MCF 10A (cell line): ENCODE measurements at regions of chr5 and their contacts with region 1.

Region 1: DNA sequence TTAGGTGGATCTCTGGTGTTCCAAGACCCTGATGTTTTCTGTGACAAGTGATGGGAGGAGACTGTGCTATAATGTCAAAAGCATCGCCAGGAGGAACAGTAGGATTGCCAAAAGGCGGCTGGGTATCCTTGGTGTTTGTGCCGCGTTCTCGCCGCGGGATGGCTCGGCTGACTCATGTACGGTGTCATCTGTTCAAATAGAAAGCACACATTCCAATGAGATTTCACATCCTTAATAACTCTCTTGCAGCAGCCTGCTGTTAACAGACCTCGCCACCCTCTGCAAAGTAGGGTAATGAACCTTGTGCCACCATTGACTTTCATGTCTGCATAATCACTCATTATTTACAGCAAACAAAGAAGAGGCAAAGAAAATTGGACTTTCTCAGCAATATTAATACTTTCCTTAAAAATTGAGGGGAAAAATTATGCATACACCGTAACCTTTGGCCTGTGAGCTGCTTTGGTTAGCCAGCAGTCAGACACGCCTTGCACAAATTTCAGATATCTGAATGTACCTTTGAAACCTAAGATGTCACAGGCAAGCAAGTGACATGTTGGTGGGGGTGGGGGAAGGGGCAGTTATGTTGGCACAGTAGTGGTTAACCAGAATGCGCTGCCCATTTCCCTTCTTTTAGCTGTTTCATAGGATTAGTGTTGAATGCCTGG is 289.4 kb downstream of the EFNA5 start:
- DNase-seq: peak; percentile 87
- H3K4me3 Mint-ChIP-seq: peak overlapping the region; percentile 29
- H3K27ac Mint-ChIP-seq: peak overlapping the region; percentile 78
- H3K4me1 Mint-ChIP-seq: peaks cover 41% of the 10 kb centered on the region
- H3K27me3 Mint-ChIP-seq: no peaks in the 10 kb centered on the region
- CTCF ChIP-seq: no peak

Region 2: GRCh38 chr5:107564896-107565512 is 183.7 kb after region 1 on chr5:
- CTCF ChIA-PET with region 1: interaction called, 7 read pairs
- POLR2A ChIA-PET with region 1: interaction called, 10 read pairs
- intact Hi-C with region 1: no loop called
- DNase-seq: no peak
- H3K4me3 Mint-ChIP-seq: peak overlapping the region; percentile 65
- H3K27ac Mint-ChIP-seq: peak overlapping the region; percentile 95
- H3K4me1 Mint-ChIP-seq: peaks cover 47% of the 10 kb centered on the region
- H3K27me3 Mint-ChIP-seq: no peaks in the 10 kb centered on the region
- CTCF ChIP-seq: no peak